ENCODE measurements at regions of chr13 and their contacts with region 1.

Region 1: DNA sequence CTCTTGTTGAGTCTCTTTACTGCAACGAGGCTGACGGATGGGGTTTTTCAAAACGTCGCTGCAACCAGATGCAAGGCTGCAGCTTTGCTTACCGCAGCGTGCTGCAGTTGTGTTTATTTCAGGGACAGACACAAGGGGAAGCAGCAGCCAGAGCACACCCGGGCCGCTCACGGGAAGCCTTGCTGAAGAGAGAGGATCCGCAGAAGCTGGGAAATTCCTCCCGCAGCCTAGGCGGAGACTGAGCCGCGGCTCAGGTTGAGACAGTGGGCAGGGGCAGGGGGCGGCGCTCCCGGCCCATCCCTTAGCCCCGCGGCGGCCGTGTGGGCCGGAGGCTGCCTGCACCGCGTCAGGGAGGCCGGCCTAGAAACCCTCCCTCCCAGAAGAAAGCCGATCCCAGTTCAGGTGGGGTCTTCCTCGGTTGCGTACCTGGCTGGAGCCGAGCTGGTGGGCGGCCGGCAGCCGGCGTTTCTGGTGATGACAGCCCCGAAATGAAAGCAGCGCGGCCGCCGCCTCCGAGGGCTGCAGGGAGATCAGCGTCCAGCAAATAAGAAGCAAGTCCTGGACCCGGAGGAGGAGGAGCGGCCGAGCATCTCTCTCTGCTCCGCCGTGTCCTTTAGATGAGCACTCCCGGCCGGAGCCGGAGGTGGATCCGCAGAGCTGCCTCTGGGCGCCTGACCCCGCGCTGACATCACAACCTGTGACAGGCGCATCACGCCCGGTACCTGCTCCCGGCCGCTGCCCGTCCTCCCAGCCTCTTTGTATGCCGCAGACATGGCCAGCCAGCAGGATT is at the start of gene FRY:
- DNase-seq: peak; percentile 87
- H3K4me3 ChIP-seq: peak within 1 kb of the TSS; percentile 67 to 82 (median 77)
- H3K27ac ChIP-seq: peak within 1 kb of the TSS; percentile 87 to 93 (median 90)
- H3K4me1 ChIP-seq: peaks cover 0 to 53% (median 42%) of the 10 kb centered on the region in 4 donors
- H3K27me3 ChIP-seq: no peaks in the 10 kb centered on the region
- CTCF ChIP-seq: no peak
- EP300 ChIP-seq: no peak
- POLR2A ChIP-seq: peak in 1 of 2 donors; percentile 25
- total RNA-seq, gene FRY: 26.7 to 118 (median 87.6) TPM

Region 2: DNA sequence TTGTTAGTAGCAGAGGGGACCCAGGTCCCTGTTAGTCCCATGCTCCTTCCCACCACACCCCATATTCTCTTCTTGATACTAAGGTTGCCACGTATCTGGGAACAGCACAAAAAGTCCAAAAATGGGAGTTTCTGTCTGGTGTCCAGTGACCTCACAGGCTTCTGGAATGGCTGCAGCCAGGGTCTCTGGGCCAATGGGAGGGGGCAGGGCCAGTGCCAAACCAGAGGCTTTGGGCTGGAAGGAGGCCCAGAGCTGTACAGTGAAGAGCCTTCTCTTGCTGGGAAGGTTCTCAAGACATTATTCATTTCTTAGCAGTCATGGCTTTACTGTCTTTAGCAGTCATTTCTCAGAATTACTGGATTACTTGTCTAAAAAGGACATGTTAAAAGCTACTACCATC is 119.6 kb after region 1 on chr13:
- intact Hi-C with region 1: loop called (anchors 5 kb)
- DNase-seq: peak; percentile 89
- H3K4me3 ChIP-seq: no peak overlapping the region
- H3K27ac ChIP-seq: peak overlapping the region; percentile 69 to 82 (median 76)
- H3K4me1 ChIP-seq: peaks cover 0 to 49% (median 40%) of the 10 kb centered on the region in 4 donors
- H3K27me3 ChIP-seq: no peaks in the 10 kb centered on the region
- CTCF ChIP-seq: no peak
- EP300 ChIP-seq: peak in 1 of 4 donors; percentile 42
- POLR2A ChIP-seq: no peak

Region 3: GRCh38 chr13:32246468-32246867 is 215.2 kb after region 1 on chr13:
- intact Hi-C with region 1: loop called (anchors 5 kb)
- DNase-seq: peak; percentile 70
- H3K4me3 ChIP-seq: no peak overlapping the region
- H3K27ac ChIP-seq: peak overlapping the region in 2 of 4 donors; percentile 35 to 36
- H3K4me1 ChIP-seq: peaks cover 0 to 44% (median 14%) of the 10 kb centered on the region in 4 donors
- H3K27me3 ChIP-seq: no peaks in the 10 kb centered on the region
- CTCF ChIP-seq: peak in 3 of 4 experiments; percentile 49 to 67 (median 53)
- EP300 ChIP-seq: no peak
- POLR2A ChIP-seq: no peak

Region 4: GRCh38 chr13:32261567-32261966 is 230.3 kb after region 1 on chr13:
- intact Hi-C with region 1: loop called (anchors 5 kb)
- DNase-seq: peak; percentile 96
- H3K4me3 ChIP-seq: no peak overlapping the region
- H3K27ac ChIP-seq: peak overlapping the region; percentile 64 to 86 (median 78)
- H3K4me1 ChIP-seq: peaks cover 0 to 47% (median 36%) of the 10 kb centered on the region in 4 donors
- H3K27me3 ChIP-seq: no peaks in the 10 kb centered on the region
- CTCF ChIP-seq: no peak
- EP300 ChIP-seq: peak in 3 of 4 donors; percentile 23 to 69 (median 37)
- POLR2A ChIP-seq: no peak

Region 5: DNA sequence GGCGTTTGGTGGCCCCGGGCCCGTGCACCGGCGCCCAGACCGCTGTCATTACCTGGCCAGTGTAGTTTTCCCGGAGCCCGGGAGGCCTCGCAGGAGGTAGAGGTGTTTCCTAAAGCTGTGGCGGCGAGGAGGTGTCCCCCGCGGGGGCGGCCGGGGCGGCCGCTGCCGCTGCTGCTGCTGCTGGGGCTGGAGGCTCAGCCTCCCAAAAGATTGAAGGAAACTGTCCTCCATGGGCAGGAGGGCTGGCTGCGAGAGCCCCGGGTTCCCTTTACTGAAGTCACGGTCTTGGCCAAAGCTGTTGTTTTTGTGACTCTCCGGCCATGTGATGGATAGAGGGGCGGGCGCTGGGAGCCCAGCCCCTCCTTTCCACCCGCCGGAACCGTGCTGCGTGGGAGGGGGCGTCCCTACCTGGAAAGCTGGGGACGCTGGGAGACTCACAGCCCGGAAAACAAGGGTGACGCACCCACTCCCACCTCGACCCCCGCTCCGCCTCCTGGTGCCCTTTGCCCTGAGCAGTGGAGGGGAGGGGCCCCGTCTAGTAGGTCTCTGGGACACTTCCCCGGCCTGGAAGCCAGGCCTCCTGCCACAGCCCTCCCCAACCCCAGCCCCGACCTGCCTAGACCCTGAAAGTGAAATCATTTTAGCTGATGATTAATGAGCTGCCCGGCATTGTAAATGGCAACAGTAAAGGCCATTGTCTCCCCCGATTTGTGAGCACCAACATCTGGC is 396.8 kb after region 1 on chr13 and contains the start of gene N4BP2L1:
- intact Hi-C with region 1: loop called (anchors 5 kb)
- DNase-seq: peak; percentile 87
- H3K4me3 ChIP-seq: peak within 1 kb of the TSS; percentile 80 to 94 (median 90)
- H3K27ac ChIP-seq: peak within 1 kb of the TSS; percentile 84 to 89 (median 88)
- H3K4me1 ChIP-seq: peaks cover 0 to 41% (median 29%) of the 10 kb centered on the region in 4 donors
- H3K27me3 ChIP-seq: no peaks in the 10 kb centered on the region
- CTCF ChIP-seq: no peak
- EP300 ChIP-seq: no peak
- POLR2A ChIP-seq: peak; percentile 66 to 68
- total RNA-seq, gene N4BP2L1: 17.7 to 34.9 (median 20.9) TPM